ENCODE measurements at regions of chr18 and their contacts with region 1.

Region 1: DNA sequence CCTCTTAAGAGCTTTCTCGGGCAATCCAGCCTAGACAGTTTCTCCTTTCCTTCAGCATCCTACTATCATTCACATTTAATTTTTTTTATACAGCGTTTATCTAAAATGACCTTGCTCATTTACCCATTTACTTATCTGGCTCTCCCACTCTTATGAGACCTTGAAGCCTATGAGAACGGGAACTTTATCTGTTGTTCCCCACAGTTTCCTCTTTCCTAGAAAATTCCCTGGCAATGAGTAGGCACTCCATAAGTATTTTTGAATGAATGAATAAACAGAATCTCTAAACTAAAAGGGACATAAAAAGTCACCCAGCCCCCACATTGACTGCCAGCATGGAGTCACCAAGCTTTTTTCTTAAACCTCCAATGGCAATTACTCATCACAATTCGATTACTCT is 353.2 kb downstream of the METTL4 start:
- DNase-seq: no peak
- ATAC-seq: no peak
- H3K4me3 ChIP-seq: no peak overlapping the region
- H3K27ac ChIP-seq: no peak overlapping the region
- H3K4me1 ChIP-seq: no peaks in the 10 kb centered on the region
- H3K27me3 ChIP-seq: no peaks in the 10 kb centered on the region

Region 2: GRCh38 chr18:877238-877637 is 1340.9 kb before region 1 on chr18:
- intact Hi-C with region 1: loop called in 1 of 4 experiments (anchors 10 kb)
- DNase-seq: no peak
- ATAC-seq: no peak
- H3K4me3 ChIP-seq: no peak overlapping the region
- H3K27ac ChIP-seq: no peak overlapping the region
- H3K4me1 ChIP-seq: no peaks in the 10 kb centered on the region
- H3K27me3 ChIP-seq: no peaks in the 10 kb centered on the region

Measured in right cardiac atrium (tissue), 5 donors.